ENCODE measurements at regions of chr9 and their contacts with region 1.

Region 1: DNA sequence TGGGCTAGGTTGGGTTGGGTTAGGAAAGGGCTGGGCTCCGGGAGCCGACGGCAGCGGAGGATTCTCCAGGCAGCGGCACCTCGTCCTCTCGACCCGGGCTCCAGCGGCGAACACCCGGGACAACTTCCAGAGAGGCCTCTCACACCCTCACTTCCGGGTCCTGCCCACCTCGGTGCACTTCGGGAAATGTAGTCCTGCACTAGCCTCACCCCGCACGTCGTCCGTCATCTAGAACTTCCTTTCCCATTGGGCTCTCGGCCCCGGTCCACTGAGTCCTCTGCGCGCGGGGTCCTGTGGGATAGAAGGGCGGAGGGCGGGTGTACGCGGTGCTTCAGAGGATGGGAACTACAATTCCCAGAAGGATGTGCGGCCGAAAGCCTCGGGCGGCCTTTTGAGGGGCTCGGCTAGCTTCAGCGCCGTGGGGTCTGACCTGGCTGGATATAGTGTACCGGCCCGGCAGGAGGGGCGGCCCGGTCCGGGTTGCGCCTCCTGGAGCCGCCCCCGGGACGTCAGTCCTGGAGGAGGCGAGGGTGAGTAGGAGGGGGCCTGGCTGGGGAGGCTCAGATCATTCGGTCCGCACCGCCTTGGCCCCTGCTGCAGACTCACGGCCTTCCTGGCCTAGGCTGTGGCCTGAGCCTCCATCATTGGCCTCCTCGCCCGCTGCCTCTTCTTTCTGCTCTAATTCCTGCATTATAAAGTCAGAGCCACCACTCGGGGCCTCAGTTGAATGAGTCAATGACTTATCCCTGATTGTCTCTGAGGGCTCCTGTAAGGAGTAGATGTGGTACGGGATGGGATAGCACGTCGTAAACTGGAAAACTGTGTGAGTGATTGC is at the starts of genes ERP44 and INVS:
- DNase-seq: peak; percentile 91 to 99 (median 95)
- ATAC-seq: peak; percentile 99
- H3K4me3 ChIP-seq: peak within 1 kb of the TSS; percentile 78
- H3K4me3 Mint-ChIP-seq: peak within 1 kb of the TSS; percentile 96
- H3K27ac ChIP-seq: peak within 1 kb of the TSS; percentile 58 to 80
- H3K27ac Mint-ChIP-seq: peak within 1 kb of the TSS; percentile 89
- H3K4me1 ChIP-seq: peaks cover 20% of the 10 kb centered on the region
- H3K4me1 Mint-ChIP-seq: peaks cover 50% of the 10 kb centered on the region
- H3K27me3 ChIP-seq: no peaks in the 10 kb centered on the region
- H3K27me3 Mint-ChIP-seq: no peaks in the 10 kb centered on the region
- CTCF ChIP-seq: no peak
- total RNA-seq, gene ERP44: 6.8 to 7.1 TPM
- total RNA-seq, gene INVS: 13.6 to 14.3 TPM

Region 2: DNA sequence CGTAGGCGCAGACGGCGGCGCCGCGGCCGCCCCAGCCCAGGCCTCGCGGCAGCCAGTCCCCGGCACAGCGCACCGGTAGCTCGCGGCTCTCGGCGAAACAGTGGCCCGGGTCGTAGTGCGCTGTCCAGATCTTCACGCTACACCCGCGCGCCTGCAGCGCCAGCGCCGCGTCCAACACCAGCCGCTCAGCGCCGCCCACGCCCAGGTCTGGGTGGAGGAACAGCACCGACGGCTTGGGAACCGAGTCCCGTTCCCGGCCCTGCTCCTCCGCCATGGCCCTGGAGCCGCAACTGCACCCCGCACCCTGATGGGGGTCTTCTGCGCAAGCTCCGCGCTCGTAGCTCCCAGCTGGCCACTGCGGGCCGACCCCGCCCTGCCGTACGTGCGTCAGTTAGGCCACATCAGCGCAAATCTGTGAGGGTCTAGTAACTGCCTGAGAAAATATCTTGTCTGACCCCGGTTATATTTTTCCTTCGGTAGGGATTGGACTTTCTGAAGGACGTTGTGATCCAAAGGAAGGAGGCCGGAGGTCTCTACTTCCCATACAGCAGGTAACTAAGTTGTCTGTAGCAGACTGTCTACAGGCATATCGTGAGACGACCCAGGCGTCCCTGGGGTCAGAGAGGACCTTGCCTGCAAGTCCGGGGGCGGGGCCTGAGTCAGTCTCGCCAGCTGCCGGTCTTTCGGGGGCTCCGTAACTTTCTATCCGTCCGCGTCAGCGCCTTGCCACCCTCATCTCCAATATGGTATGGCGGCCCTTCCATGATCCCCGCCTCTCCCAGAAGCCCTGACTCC is 877.3 kb before region 1 on chr9 and contains the starts of genes ALG2 and SEC61B:
- CTCF ChIA-PET with region 1: no interaction called
- POLR2A ChIA-PET with region 1: no interaction called
- intact Hi-C with region 1: loop called in 1 of 2 experiments (anchors 5 kb)
- DNase-seq: peak; percentile 87 to 96 (median 90)
- ATAC-seq: peak; percentile 84
- H3K4me3 ChIP-seq: peak within 1 kb of the TSS; percentile 91
- H3K4me3 Mint-ChIP-seq: peak within 1 kb of the TSS; percentile 98
- H3K27ac ChIP-seq: peak within 1 kb of the TSS; percentile 89 to 95
- H3K27ac Mint-ChIP-seq: peak within 1 kb of the TSS; percentile 99
- H3K4me1 ChIP-seq: peaks cover 33% of the 10 kb centered on the region
- H3K4me1 Mint-ChIP-seq: peaks cover 81% of the 10 kb centered on the region
- H3K27me3 ChIP-seq: no peaks in the 10 kb centered on the region
- H3K27me3 Mint-ChIP-seq: no peaks in the 10 kb centered on the region
- CTCF ChIP-seq: no peak
- total RNA-seq, gene ALG2: 18.1 to 19.9 TPM
- total RNA-seq, gene SEC61B: 83.4 to 84.2 TPM

Region 3: DNA sequence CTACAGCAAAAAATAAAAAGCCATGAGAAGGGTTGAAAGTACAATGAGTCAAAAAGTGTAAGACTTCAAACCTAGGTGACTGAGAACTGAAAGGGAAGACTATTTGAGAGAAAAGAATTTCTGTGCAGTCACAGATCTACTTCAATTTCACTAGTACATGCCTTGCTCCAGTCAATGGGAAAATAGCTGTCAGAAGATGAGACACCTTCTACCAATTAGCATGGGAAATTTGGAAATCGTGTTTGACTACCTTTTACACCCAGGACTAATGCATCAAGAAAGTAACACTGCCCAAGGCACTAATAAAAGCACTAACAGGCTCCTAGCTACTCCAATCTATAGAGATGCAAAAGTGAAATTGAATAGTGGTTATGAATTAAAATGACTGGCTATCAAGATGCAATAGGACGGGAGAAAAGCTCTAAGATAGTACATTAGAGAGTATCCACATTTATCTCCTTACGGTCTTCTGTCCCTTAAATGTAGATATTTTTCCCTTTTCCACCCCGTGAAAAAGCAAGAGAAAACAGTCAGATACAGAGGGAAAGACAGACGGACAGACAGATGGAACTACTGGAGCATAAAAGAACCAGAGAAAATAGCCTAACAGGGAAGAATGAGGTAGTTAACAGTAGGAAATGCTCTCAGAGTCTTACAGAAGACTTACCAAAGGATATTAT is 15.5 kb before region 1 on chr9:
- CTCF ChIA-PET with region 1: interaction called, 3 read pairs
- POLR2A ChIA-PET with region 1: no interaction called
- intact Hi-C with region 1: loop called in 1 of 2 experiments (anchors 2 kb)
- DNase-seq: no peak
- ATAC-seq: no peak
- H3K4me3 ChIP-seq: no peak overlapping the region
- H3K4me3 Mint-ChIP-seq: peak overlapping the region; percentile 18
- H3K27ac ChIP-seq: no peak overlapping the region
- H3K27ac Mint-ChIP-seq: no peak overlapping the region
- H3K4me1 ChIP-seq: peaks cover 6% of the 10 kb centered on the region
- H3K4me1 Mint-ChIP-seq: peaks cover 92% of the 10 kb centered on the region
- H3K27me3 ChIP-seq: no peaks in the 10 kb centered on the region
- H3K27me3 Mint-ChIP-seq: no peaks in the 10 kb centered on the region
- CTCF ChIP-seq: no peak

Region 4: GRCh38 chr9:100411472-100412283 is 312.6 kb after region 1 on chr9:
- CTCF ChIA-PET with region 1: no interaction called
- POLR2A ChIA-PET with region 1: no interaction called
- intact Hi-C with region 1: loop called in 1 of 2 experiments (anchors 5 kb)
- DNase-seq: peak; percentile 66 to 94 (median 82)
- ATAC-seq: peak; percentile 100
- H3K4me3 ChIP-seq: peak overlapping the region; percentile 68
- H3K4me3 Mint-ChIP-seq: peak overlapping the region; percentile 92
- H3K27ac ChIP-seq: no peak overlapping the region
- H3K27ac Mint-ChIP-seq: peak overlapping the region; percentile 40
- H3K4me1 ChIP-seq: peaks cover 13% of the 10 kb centered on the region
- H3K4me1 Mint-ChIP-seq: peaks cover 16% of the 10 kb centered on the region
- H3K27me3 ChIP-seq: peaks cover 0 to 15% of the 10 kb centered on the region in 2 experiments
- H3K27me3 Mint-ChIP-seq: peaks cover 36% of the 10 kb centered on the region
- CTCF ChIP-seq: no peak

Region 5: GRCh38 chr9:101533334-101534107 is 1434.4 kb after region 1 on chr9 and contains the start of gene RNF20:
- CTCF ChIA-PET with region 1: no interaction called
- POLR2A ChIA-PET with region 1: no interaction called
- intact Hi-C with region 1: loop called in 1 of 2 experiments (anchors 10 kb)
- DNase-seq: peak; percentile 98 to 100 (median 99)
- ATAC-seq: peak; percentile 90
- H3K4me3 ChIP-seq: peak within 1 kb of the TSS; percentile 67
- H3K4me3 Mint-ChIP-seq: peak within 1 kb of the TSS; percentile 90
- H3K27ac ChIP-seq: peak within 1 kb of the TSS; percentile 91 to 96
- H3K27ac Mint-ChIP-seq: peak within 1 kb of the TSS; percentile 97
- H3K4me1 ChIP-seq: peaks cover 16% of the 10 kb centered on the region
- H3K4me1 Mint-ChIP-seq: peaks cover 16% of the 10 kb centered on the region
- H3K27me3 ChIP-seq: no peaks in the 10 kb centered on the region
- H3K27me3 Mint-ChIP-seq: peaks cover 4% of the 10 kb centered on the region
- CTCF ChIP-seq: no peak
- total RNA-seq, gene RNF20: 26.9 to 27.6 TPM

Measured in CD4-positive, alpha-beta T cell (primary cell).